Natural killer cell (primary cell): ENCODE measurements at regions of chr12 and their contacts with region 1.

Region 1: DNA sequence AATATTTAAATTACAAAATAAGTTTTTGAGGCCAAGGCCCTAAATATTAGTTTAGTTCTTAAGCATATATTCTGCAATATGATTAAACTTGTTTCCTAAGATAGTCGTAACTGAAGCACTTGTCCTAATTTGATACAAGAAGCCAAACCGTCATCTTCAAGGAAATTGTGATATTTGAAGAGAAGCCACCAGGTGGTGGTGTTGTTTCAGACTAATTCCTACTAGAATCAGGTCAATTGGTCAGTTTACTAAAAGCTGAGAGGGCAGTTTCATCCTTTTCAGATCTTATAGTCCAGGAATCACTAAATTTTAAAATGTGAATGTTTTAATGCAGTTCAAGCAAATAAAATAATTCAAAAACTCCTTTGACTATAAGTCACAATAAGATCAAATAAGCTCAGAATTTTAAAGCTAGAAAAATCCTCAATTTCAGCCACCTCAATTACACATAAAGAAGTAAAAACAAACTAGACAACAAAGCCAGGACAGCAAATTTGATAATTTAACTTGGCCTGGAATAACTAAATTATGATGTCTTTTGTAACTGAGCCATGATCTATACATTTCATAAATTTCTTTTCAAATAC is 7.1 kb upstream of the ARL1 start:
- DNase-seq: peak in 1 of 2 donors; percentile 53
- ATAC-seq: peak in 2 of 3 donors; percentile 34 to 54
- H3K4me3 ChIP-seq: no peak overlapping the region
- H3K4me3 Mint-ChIP-seq: no peak overlapping the region
- H3K27ac ChIP-seq: no peak overlapping the region
- H3K27ac Mint-ChIP-seq: no peak overlapping the region
- H3K4me1 ChIP-seq: no peaks in the 10 kb centered on the region
- H3K4me1 Mint-ChIP-seq: no peaks in the 10 kb centered on the region
- H3K27me3 ChIP-seq: peaks cover 2% of the 10 kb centered on the region
- H3K27me3 Mint-ChIP-seq: peaks cover 2 to 10% of the 10 kb centered on the region in 2 donors
- CTCF ChIP-seq: peak; percentile 78

Region 2: GRCh38 chr12:101356794-101357193 is 57.8 kb before region 1 on chr12:
- intact Hi-C with region 1: no loop called
- DNase-seq: no peak
- ATAC-seq: no peak
- H3K4me3 ChIP-seq: no peak overlapping the region
- H3K4me3 Mint-ChIP-seq: no peak overlapping the region
- H3K27ac ChIP-seq: no peak overlapping the region
- H3K27ac Mint-ChIP-seq: no peak overlapping the region
- H3K4me1 ChIP-seq: no peaks in the 10 kb centered on the region
- H3K4me1 Mint-ChIP-seq: no peaks in the 10 kb centered on the region
- H3K27me3 ChIP-seq: no peaks in the 10 kb centered on the region
- H3K27me3 Mint-ChIP-seq: no peaks in the 10 kb centered on the region
- CTCF ChIP-seq: no peak

Region 3: GRCh38 chr12:101527682-101528081 is 113.1 kb after region 1 on chr12:
- intact Hi-C with region 1: no loop called
- DNase-seq: no peak
- ATAC-seq: no peak
- H3K4me3 ChIP-seq: no peak overlapping the region
- H3K4me3 Mint-ChIP-seq: no peak overlapping the region
- H3K27ac ChIP-seq: no peak overlapping the region
- H3K27ac Mint-ChIP-seq: no peak overlapping the region
- H3K4me1 ChIP-seq: no peaks in the 10 kb centered on the region
- H3K4me1 Mint-ChIP-seq: no peaks in the 10 kb centered on the region
- H3K27me3 ChIP-seq: no peaks in the 10 kb centered on the region
- H3K27me3 Mint-ChIP-seq: peaks cover 0 to 6% of the 10 kb centered on the region in 2 donors
- CTCF ChIP-seq: no peak

Region 4: DNA sequence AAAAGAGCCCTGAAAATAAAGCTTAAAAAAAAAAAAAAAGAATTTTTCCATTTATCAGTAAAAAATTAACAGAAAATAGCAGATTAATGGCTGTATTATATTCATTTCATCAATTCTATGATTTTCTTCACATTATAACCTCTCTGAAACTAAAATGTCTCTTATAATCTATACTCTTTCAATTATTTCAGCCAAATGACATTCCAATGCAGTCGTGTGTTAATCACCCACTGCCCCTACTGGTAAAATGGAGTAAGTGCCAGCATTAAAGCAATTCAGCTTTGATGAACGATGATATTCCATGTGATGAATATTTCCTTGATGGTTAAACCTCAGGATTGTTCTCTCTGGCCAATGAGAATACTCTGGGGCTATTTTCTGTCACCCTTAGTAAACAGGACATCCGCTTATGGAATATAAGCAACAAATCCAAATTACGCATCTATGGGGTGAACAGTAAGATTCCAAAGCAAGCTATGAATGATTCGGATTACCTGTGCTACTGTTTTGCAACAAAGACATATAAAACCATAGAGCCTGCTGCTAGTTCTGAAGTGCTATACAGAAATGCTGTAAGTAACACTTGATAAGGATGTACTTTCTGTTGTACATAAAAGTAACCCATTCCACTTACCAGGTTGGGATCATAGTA is 344.9 kb after region 1 on chr12:
- intact Hi-C with region 1: loop called (anchors 1 kb)
- DNase-seq: peak in 1 of 2 donors; percentile 61
- ATAC-seq: peak in 2 of 3 donors; percentile 65 to 79
- H3K4me3 ChIP-seq: no peak overlapping the region
- H3K4me3 Mint-ChIP-seq: no peak overlapping the region
- H3K27ac ChIP-seq: no peak overlapping the region
- H3K27ac Mint-ChIP-seq: peak overlapping the region in 1 of 2 donors; percentile 45
- H3K4me1 ChIP-seq: no peaks in the 10 kb centered on the region
- H3K4me1 Mint-ChIP-seq: peaks cover 13 to 16% of the 10 kb centered on the region in 2 donors
- H3K27me3 ChIP-seq: no peaks in the 10 kb centered on the region
- H3K27me3 Mint-ChIP-seq: no peaks in the 10 kb centered on the region
- CTCF ChIP-seq: peak; percentile 63